Naive thymus-derived CD8-positive, alpha-beta T cell (primary cell): ENCODE measurements at regions of chr4 and their contacts with region 1.

Region 1: DNA sequence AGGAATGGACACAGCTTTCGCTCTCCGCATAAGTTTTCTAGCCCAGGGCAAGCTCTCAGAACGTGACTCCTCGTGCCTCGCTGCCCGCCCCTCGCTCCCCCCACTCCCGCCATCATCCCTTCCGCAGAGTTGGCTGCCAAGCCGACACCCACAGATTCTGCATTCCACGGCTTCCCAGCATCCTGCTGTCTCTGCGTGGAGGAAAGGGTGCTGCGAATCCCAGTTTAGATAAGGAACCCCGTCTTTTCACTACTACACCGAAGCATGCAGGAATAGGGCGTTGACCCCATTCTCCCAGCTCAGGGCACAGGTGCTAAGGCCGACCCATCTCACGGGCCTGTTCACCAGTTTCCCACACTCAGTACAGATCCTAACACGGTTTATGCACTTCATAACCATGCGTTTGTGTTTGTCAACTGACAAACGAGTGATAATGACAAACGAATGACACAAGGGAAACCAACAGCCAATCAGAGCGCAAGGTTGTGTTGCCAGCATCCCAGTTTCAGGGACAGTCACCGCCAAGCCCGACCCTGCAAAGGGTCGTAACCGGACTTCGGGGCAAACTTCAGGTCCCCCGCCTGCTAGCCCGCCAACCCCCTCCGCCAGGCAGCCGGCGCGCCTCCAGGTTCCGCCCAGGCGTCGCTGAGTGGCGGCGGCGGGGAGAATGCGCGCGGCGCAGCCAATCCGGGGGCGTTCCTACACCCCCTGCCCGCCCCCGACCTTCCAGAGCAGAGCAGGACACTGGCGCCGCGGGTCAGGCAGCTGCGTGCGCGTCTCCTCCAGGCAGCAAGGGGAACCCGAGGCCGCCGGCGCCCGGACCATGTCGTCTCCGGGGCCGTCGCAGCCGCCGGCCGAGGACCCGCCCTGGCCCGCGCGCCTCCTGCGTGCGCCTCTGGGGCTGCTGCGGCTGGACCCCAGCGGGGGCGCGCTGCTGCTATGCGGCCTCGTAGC is at the start of gene CYP2U1:
- DNase-seq: peak; percentile 73 to 87 (median 80)
- ATAC-seq: peak; percentile 92 to 93
- H3K4me3 Mint-ChIP-seq: peak within 1 kb of the TSS; percentile 86 to 97 (median 92)
- H3K27ac Mint-ChIP-seq: peak within 1 kb of the TSS; percentile 60 to 94 (median 88)
- H3K4me1 Mint-ChIP-seq: peaks cover 23 to 47% (median 38%) of the 10 kb centered on the region in 4 donors
- H3K27me3 Mint-ChIP-seq: no peaks in the 10 kb centered on the region
- polyA plus RNA-seq, gene CYP2U1: 3.4 to 5.6 (median 5.2) TPM

Region 2: GRCh38 chr4:107719922-107720722 is 211.0 kb before region 1 on chr4 and contains the start of gene PAPSS1:
- POLR2A ChIA-PET with region 1: interaction called, 15 read pairs
- DNase-seq: peak; percentile 89 to 97 (median 95)
- ATAC-seq: peak; percentile 85
- H3K4me3 Mint-ChIP-seq: peak within 1 kb of the TSS; percentile 93 to 98 (median 95)
- H3K27ac Mint-ChIP-seq: peak within 1 kb of the TSS; percentile 87 to 98 (median 95)
- H3K4me1 Mint-ChIP-seq: peaks cover 22 to 32% (median 30%) of the 10 kb centered on the region in 4 donors
- H3K27me3 Mint-ChIP-seq: no peaks in the 10 kb centered on the region
- polyA plus RNA-seq, gene PAPSS1: 22.8 to 23.9 (median 23.2) TPM

Region 3: GRCh38 chr4:107902715-107903114 is 28.4 kb before region 1 on chr4:
- POLR2A ChIA-PET with region 1: no interaction called
- DNase-seq: no peak
- ATAC-seq: no peak
- H3K4me3 Mint-ChIP-seq: no peak overlapping the region
- H3K27ac Mint-ChIP-seq: peak overlapping the region in 1 of 10 donors; percentile 31
- H3K4me1 Mint-ChIP-seq: no peaks in the 10 kb centered on the region
- H3K27me3 Mint-ChIP-seq: peaks cover 14 to 40% (median 19%) of the 10 kb centered on the region in 5 donors